ENCODE measurements at regions of chr2 and their contacts with region 1.

Region 1: DNA sequence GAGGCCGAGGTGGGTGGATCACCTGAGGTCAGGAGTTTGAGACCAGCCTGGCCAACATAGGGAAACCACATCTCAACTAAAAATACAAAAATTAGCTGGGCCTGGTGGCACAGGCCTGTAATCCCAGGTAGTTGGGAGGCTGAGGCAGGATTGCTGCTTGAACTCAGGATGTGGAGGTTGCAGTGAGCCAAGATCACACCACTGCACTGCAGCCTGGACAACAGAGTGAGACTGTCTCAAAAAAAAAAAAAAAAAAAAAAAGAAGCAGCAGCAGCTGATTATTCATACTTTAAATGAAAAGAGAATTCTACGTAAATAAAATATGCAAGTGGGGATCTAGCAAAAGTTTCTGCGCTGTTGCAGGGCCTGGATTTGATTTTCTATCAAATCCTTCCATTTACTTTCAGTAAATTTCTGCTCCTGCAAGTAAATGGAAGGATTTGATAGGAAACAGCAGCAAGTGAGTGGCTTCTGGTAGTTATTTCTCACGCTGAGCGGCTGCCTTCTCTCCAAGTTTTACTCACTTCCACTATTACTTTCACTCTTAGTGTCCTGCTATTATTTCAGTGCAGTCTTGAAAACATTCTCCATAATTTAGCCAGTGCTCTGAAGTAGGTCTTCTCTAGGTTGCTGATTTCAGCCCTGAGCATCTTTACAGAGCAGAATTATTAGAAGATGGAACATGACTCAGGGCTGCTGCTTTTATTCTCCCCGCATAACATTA is 68.4 kb downstream of the SLC16A14 start:
- DNase-seq: no peak
- H3K4me3 ChIP-seq: no peak overlapping the region
- H3K27ac ChIP-seq: no peak overlapping the region
- H3K4me1 ChIP-seq: no peaks in the 10 kb centered on the region
- H3K27me3 ChIP-seq: no peaks in the 10 kb centered on the region
- CTCF ChIP-seq: no peak

Region 2: DNA sequence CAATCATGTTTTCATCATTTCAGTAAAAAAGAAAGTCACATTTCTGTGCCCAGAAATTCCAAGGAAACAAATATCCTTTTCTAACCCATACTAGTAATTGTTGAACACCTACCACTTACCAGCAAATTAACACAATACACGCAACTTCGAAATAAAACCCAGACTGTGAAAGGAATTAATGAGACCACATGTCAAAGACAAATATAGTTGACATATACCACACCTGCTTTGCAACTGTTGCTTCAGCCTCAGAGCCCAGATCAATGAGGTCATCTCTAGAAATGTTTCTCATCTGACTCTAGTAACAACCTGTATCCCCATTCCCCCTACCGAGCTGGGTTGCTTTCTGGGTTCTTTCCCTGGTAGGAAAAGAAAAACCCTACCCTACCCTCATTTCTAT is 131.1 kb before region 1 on chr2:
- CTCF ChIA-PET with region 1: interaction called, 19 read pairs
- POLR2A ChIA-PET with region 1: no interaction called
- intact Hi-C with region 1: no loop called
- DNase-seq: no peak
- H3K4me3 ChIP-seq: no peak overlapping the region
- H3K27ac ChIP-seq: no peak overlapping the region
- H3K4me1 ChIP-seq: peaks cover 16% of the 10 kb centered on the region
- H3K27me3 ChIP-seq: no peaks in the 10 kb centered on the region
- CTCF ChIP-seq: no peak

Region 3: DNA sequence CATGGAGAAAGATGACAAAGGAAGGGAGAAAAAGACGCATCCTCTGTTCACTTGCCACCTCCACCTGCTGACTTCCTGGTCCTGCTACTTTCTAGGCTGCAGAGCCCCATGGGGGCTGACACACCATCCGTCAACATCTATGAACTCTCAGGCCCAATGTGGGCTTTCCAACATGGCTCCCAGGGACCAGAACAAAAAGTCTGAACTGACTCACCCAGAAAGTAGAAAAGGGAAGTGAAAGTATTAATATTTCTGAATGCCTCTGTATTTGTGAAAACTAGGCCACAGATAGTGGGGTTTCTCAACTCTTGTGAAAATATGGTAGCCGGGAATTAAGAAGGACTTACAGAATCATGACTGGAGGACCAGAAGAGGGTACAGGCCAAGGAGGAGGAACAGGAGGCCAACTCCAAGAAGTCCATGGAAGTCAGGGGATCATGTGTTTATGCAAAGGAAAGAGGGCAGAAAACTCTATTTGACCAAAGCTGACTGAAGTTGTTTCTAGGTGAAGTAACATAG is 589.3 kb after region 1 on chr2:
- CTCF ChIA-PET with region 1: no interaction called
- POLR2A ChIA-PET with region 1: interaction called, 13 read pairs
- intact Hi-C with region 1: no loop called
- DNase-seq: no peak
- H3K4me3 ChIP-seq: no peak overlapping the region
- H3K27ac ChIP-seq: no peak overlapping the region
- H3K4me1 ChIP-seq: no peaks in the 10 kb centered on the region
- H3K27me3 ChIP-seq: no peaks in the 10 kb centered on the region
- CTCF ChIP-seq: no peak